Activated CD4-positive, alpha-beta T cell treated with anti-CD3 and anti-CD28 coated beads, Interleukin-2, amount 10 ng/mL, durations not matched to agents 24 days and 14 days (primary cell): ENCODE measurements at regions of chr3 and their contacts with region 1.

Region 1: DNA sequence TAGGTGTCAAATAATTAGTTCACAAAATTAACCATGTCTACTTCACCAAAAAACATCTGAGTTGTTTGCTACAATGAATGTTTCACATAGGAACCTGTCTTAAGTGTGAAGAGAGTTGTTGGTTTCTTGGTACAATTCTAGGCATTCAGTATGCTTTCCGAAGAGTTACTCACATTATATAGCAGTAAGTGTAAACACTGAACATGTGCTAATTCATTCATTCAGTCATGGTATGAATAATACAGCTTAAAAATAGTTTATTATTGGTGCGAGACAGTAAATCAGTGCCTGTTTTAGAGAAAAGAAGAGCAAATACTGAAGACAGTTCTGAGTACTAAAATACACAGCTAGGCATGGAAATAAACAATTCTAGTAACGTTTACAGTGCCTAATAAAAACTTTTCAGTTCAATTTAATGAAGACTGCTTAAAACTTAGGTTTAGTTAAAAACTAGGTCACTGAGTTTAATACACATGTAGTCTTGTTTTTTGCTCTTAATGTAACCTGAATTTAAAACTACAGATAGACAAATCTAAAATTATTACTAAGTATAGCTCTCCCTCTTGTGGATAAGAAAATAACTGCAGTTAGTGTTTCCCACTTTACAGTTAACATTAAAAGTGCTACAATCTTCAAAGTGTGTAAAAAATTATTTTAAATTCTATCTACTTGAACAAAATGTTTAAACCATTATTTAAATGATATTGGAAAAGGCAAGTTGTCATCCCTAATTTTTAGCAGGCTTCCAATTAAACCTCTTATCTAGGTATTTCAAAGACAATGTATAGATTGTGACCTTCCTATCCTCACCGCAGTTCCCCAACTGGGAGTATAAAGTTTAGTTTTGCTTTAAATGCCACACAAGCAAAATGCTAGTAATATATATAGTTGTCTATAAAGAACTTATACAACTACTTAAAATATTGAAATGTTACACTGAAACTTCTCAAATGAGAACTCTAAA is 20.1 kb upstream of the ZCWPW2 start:
- DNase-seq: no peak
- H3K4me3 Mint-ChIP-seq: no peak overlapping the region
- H3K27ac Mint-ChIP-seq: no peak overlapping the region
- H3K4me1 Mint-ChIP-seq: peaks cover 23% of the 10 kb centered on the region
- H3K27me3 Mint-ChIP-seq: no peaks in the 10 kb centered on the region

Region 2: DNA sequence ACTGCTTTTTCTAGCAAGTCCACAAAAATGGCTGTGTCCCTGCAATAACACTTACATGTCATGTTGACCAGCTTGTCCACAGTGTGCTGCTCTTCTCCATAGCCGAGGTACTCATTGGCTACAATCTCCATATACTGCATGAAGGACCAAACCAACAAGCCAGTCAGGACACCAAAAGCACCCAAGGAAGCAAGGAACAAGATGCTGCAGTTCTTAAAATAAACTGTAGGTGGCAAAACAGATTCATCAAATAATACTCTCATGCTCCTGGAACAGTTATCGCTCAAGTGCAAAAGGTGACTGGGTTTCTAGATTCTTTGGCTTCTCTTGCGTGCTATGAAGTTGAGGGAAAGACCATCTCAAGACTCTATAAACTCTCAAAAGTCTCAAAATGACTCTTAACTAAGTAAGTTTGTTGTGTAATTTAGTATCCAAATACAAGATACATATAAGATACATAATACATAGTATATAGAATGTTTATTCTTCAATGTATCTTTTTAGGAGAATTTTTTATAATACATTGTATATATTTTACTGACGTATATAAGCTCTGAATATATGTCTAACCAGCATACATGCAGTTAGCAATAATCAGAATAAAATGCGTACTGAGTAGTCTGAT is 1016.3 kb before region 1 on chr3:
- intact Hi-C with region 1: loop called (anchors 10 kb)
- DNase-seq: peak; percentile 69
- H3K4me3 Mint-ChIP-seq: no peak overlapping the region
- H3K27ac Mint-ChIP-seq: no peak overlapping the region
- H3K4me1 Mint-ChIP-seq: no peaks in the 10 kb centered on the region
- H3K27me3 Mint-ChIP-seq: peaks cover 12% of the 10 kb centered on the region

Region 3: DNA sequence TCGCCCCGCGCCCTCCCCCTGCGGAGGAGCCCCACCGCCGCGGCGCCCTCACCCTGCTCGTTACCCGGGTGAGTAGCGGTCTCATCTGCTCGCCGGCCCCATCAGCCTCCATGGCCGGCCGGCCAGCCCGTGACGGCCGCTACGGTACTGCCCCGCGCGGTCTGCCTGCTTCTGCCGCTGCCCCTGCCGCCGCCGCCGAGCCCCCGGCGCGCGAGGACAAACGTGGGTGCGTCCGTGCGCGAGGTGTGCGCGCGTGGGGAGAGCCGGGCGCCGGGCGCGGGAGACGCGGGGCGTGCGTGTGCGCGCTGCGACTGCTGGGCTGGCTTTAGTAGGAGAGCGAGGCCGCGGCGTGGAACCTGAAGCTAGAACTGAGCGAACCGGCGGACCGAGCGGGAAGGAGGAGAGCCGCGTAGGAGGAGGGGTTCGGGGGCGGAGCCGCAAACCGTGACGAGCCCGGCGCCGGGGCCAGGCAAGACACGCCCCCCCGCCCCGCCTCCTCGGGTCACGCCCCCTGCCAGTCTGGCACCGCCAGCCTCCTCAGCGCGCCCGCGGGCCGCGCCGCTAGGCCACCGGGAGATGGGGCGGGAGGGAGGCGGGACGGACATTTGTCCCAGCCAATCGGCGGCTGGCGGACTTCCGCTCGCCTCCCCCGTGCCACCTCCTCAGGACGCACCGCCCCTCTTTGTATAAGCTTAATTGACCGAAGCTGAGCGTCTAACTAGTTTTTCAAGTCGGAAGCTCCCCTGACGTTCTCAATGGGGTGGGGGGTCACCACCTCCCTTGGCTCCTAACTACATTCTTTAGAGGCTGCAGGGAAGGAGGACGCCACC is 844.2 kb before region 1 on chr3 and contains the start of gene SLC4A7:
- intact Hi-C with region 1: loop called (anchors 1 kb)
- DNase-seq: peak; percentile 99
- H3K4me3 Mint-ChIP-seq: peak within 1 kb of the TSS; percentile 100
- H3K27ac Mint-ChIP-seq: peak within 1 kb of the TSS; percentile 99
- H3K4me1 Mint-ChIP-seq: peaks cover 35% of the 10 kb centered on the region
- H3K27me3 Mint-ChIP-seq: no peaks in the 10 kb centered on the region
- total RNA-seq, gene SLC4A7: 65.8 and 69.0 TPM in 2 replicates

Region 4: DNA sequence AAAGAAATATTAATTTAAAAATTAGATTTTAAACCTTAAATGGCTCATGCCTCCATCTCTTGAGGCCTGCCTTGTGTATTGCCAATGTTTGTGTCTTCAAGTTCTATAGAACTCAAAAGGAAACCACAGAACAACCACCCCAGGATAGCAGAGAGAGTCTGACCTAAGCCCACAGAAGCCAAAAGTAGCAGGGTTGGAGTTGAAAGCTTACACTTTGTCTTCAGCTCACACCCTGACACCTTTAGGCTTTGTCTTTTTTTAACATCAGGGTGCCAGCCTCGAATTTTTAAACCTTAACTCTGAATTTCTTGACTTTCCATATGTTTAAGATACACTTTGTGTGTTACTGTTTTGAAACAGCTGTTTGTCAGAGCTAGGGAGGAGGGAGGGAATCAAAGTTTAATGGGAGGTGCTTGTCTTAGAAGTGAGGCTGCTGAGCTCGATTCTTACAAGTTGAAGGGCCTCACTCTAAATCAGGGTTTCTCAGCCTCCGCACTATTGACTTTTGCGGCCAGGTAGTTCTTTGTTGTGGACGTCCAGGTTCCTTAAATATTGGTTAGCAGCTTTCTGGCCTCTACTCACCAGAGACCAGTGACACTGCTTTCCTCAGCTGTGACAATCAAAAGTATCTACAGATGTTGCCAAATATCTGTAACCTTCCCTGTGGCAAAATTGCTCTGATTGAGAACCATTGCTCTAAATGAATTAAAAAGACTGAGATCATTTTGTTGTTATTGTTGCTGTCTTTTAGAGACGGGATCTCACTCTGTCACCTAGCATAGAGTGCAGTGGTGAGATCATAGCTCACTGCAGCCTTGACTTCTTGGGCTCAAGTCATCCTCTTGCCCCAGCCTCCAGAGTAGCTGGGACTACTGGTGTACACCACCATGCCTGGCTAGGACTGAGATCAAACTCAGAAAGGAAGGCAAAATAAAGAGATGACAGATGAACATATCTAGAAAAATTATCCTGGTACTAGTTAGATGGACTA is 467.1 kb before region 1 on chr3:
- intact Hi-C with region 1: loop called (anchors 5 kb)
- DNase-seq: peak; percentile 83
- H3K4me3 Mint-ChIP-seq: peak overlapping the region; percentile 52
- H3K27ac Mint-ChIP-seq: peak overlapping the region; percentile 87
- H3K4me1 Mint-ChIP-seq: peaks cover 19% of the 10 kb centered on the region
- H3K27me3 Mint-ChIP-seq: no peaks in the 10 kb centered on the region

Region 5: GRCh38 chr3:28050895-28051294 is 277.6 kb before region 1 on chr3:
- intact Hi-C with region 1: loop called (anchors 2 kb)
- DNase-seq: no peak
- H3K4me3 Mint-ChIP-seq: no peak overlapping the region
- H3K27ac Mint-ChIP-seq: peak overlapping the region; percentile 4
- H3K4me1 Mint-ChIP-seq: peaks cover 9% of the 10 kb centered on the region
- H3K27me3 Mint-ChIP-seq: peaks cover 2% of the 10 kb centered on the region

Region 6: GRCh38 chr3:28286595-28286994 is 41.9 kb before region 1 on chr3:
- intact Hi-C with region 1: loop called (anchors 5 kb)
- DNase-seq: no peak
- H3K4me3 Mint-ChIP-seq: no peak overlapping the region
- H3K27ac Mint-ChIP-seq: no peak overlapping the region
- H3K4me1 Mint-ChIP-seq: peaks cover 12% of the 10 kb centered on the region
- H3K27me3 Mint-ChIP-seq: no peaks in the 10 kb centered on the region

Region 7: GRCh38 chr3:28348629-28349483 is 20.4 kb after region 1 on chr3 and contains the starts of genes AZI2 and ZCWPW2:
- intact Hi-C with region 1: loop called (anchors 1 kb)
- DNase-seq: peak; percentile 98
- H3K4me3 Mint-ChIP-seq: peak within 1 kb of the TSS; percentile 98
- H3K27ac Mint-ChIP-seq: peak within 1 kb of the TSS; percentile 96
- H3K4me1 Mint-ChIP-seq: peaks cover 41% of the 10 kb centered on the region
- H3K27me3 Mint-ChIP-seq: no peaks in the 10 kb centered on the region
- total RNA-seq, gene AZI2: 35.6 and 38.7 TPM in 2 replicates
- total RNA-seq, gene ZCWPW2: 0.14 TPM in 1 of 2 replicates, not detected in the other